ENCODE measurements at regions of chr19 and their contacts with region 1.

Region 1: DNA sequence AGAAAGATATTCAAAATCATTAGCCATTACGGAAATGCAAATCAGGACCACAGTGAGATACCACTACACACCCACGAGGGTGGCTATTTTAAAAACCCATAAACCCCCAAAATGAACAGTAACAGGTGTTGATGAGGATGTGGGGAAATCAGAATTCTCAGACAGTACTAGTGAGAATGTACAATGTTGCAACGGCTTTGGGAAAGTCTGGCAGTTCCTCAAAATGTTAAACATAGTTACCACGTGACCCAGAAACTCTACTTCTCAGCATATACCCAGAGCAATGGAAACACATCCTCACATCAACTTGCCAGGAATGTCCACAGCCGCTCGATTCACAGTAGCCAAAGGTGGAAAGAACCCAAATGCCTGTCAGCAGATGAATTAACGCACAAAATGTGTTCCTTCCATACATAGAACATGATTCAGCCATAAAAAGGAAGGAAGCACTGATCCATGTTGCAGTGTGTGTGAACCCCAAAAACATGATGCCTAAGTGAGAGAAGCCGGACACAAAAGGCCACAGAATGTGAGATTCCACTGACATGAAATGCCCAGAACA is 7.0 kb downstream of the PLVAP start:
- DNase-seq: peak; percentile 66
- CTCF ChIP-seq: no peak

Region 2: GRCh38 chr19:17346109-17346671 is 23.9 kb before region 1 on chr19:
- CTCF ChIA-PET with region 1: interaction called, 11 read pairs
- POLR2A ChIA-PET with region 1: no interaction called
- DNase-seq: peak; percentile 89
- CTCF ChIP-seq: peak; percentile 95

Measured in GM10248 (cell line).